Activated naive CD4-positive, alpha-beta T cell treated with anti-CD3 and anti-CD28 coated beads for 36 hours (primary cell): ENCODE measurements at regions of chr6 and their contacts with region 1.

Region 1: GRCh38 chr6:134174672-134175198 is 122.3 kb upstream of the SLC2A12 start:
- DNase-seq: peak; percentile 95
- H3K4me3 Mint-ChIP-seq: peak overlapping the region; percentile 97
- H3K27ac Mint-ChIP-seq: peak overlapping the region; percentile 97
- H3K4me1 Mint-ChIP-seq: peaks cover 60% of the 10 kb centered on the region
- H3K27me3 Mint-ChIP-seq: no peaks in the 10 kb centered on the region

Region 2: GRCh38 chr6:133877116-133877515 is 297.6 kb before region 1 on chr6:
- CTCF ChIA-PET with region 1: no interaction called
- intact Hi-C with region 1: no loop called
- DNase-seq: no peak
- H3K4me3 Mint-ChIP-seq: no peak overlapping the region
- H3K27ac Mint-ChIP-seq: no peak overlapping the region
- H3K4me1 Mint-ChIP-seq: no peaks in the 10 kb centered on the region
- H3K27me3 Mint-ChIP-seq: peaks cover 26% of the 10 kb centered on the region

Region 3: GRCh38 chr6:133952815-133953633 is 221.7 kb before region 1 on chr6 and contains the start of gene TBPL1:
- CTCF ChIA-PET with region 1: no interaction called
- intact Hi-C with region 1: loop called (anchors 5 kb)
- DNase-seq: peak; percentile 92
- H3K4me3 Mint-ChIP-seq: peak within 1 kb of the TSS; percentile 87
- H3K27ac Mint-ChIP-seq: peak within 1 kb of the TSS; percentile 86
- H3K4me1 Mint-ChIP-seq: peaks cover 36% of the 10 kb centered on the region
- H3K27me3 Mint-ChIP-seq: no peaks in the 10 kb centered on the region
- total RNA-seq, gene TBPL1: 27.0 to 27.6 TPM

Region 4: GRCh38 chr6:134235937-134236751 is 61.4 kb after region 1 on chr6:
- CTCF ChIA-PET with region 1: interaction called, 3 read pairs
- intact Hi-C with region 1: loop called (anchors 1 kb)
- DNase-seq: peak; percentile 41
- H3K4me3 Mint-ChIP-seq: peak overlapping the region; percentile 15
- H3K27ac Mint-ChIP-seq: peak overlapping the region; percentile 95
- H3K4me1 Mint-ChIP-seq: peaks cover 57% of the 10 kb centered on the region
- H3K27me3 Mint-ChIP-seq: no peaks in the 10 kb centered on the region

Region 5: DNA sequence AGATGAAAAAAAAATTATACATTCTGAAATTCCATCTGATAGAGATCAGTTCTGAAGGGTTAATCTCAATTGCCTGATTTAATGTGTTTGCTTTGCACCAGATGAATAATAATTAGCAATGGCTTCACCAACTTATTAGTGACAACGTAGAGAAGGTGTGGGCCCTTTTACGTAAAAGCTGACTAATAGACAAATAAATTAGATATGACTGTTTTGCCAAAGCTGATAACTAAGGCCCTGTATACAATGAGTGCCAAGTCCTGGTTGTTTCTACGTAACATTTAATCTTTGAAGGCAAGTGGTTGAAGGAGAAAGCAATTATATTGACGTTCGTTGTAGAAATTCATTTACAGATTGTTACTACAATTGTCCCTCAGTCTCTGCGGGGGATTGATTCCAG is 132.3 kb after region 1 on chr6:
- CTCF ChIA-PET with region 1: no interaction called
- intact Hi-C with region 1: no loop called
- DNase-seq: no peak
- H3K4me3 Mint-ChIP-seq: no peak overlapping the region
- H3K27ac Mint-ChIP-seq: no peak overlapping the region
- H3K4me1 Mint-ChIP-seq: peaks cover 15% of the 10 kb centered on the region
- H3K27me3 Mint-ChIP-seq: no peaks in the 10 kb centered on the region

Region 6: DNA sequence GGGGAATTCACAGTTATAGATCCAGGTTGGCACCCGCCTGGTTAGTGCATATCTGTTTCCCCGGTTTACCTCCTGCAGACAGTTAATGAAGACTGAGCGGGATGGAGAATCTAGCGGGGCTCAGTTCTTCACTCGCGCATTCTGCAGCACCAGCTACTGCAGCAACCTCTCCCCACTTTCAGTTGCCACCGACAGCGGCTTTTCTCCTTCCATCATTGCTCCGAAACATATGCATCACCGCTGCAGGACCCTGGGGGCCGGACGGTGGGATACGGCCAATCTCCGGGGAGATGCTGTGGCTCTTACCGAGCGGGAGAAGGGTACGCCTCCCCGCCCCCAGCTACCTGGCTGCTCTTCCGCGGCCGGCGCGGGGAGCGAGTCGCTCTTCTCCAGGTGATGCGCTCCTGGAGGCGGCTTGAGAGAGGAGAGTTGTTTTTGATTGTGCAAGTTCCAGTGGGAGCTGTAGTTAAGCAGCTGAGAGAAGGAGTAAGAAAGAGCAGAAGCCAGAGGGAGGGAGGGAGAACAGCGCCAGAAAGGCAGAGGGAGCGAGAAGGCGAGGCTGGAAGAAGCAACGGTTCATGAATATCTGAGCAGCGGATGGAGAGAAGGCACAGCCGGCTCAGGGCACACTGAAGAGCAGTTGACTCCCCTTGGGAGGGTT is 142.9 kb after region 1 on chr6 and contains the start of gene SGK1:
- CTCF ChIA-PET with region 1: no interaction called
- intact Hi-C with region 1: loop called (anchors 2 kb)
- DNase-seq: peak; percentile 43
- H3K4me3 Mint-ChIP-seq: peak within 1 kb of the TSS; percentile 85
- H3K27ac Mint-ChIP-seq: peak within 1 kb of the TSS; percentile 14
- H3K4me1 Mint-ChIP-seq: peaks cover 36% of the 10 kb centered on the region
- H3K27me3 Mint-ChIP-seq: peaks cover 21% of the 10 kb centered on the region
- total RNA-seq, gene SGK1: 202 to 208 TPM

Region 7: GRCh38 chr6:134379086-134379485 is 204.4 kb after region 1 on chr6:
- CTCF ChIA-PET with region 1: interaction called, 5 read pairs
- intact Hi-C with region 1: loop called (anchors 1 kb)
- DNase-seq: peak; percentile 87
- H3K4me3 Mint-ChIP-seq: peak overlapping the region; percentile 35
- H3K27ac Mint-ChIP-seq: peak overlapping the region; percentile 84
- H3K4me1 Mint-ChIP-seq: peaks cover 40% of the 10 kb centered on the region
- H3K27me3 Mint-ChIP-seq: no peaks in the 10 kb centered on the region

Region 8: DNA sequence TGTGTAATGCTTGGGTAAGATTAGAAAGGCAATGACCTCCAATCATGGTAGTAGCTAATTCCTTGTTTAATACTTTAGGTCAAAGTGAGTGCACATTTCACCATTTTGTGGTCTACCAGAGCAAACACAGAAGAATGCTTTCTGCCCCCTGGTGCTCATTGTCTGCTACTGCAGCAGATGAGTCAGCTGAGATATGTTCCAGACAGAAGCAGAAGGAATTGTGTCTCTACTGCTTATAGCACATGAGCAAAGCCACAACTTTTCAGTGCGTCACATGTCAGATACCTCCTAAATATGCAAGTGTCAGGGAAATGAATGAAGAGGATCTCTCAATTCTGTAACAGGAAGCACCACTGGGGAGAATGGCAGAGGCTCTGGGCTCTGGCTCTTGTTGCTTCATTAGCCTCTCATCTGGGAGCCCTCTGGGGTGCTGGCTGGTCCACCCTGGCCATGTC is 466.3 kb after region 1 on chr6:
- CTCF ChIA-PET with region 1: interaction called, 25 read pairs
- intact Hi-C with region 1: loop called (anchors 1 kb)
- DNase-seq: peak; percentile 91
- H3K4me3 Mint-ChIP-seq: no peak overlapping the region
- H3K27ac Mint-ChIP-seq: peak overlapping the region; percentile 57
- H3K4me1 Mint-ChIP-seq: peaks cover 34% of the 10 kb centered on the region
- H3K27me3 Mint-ChIP-seq: no peaks in the 10 kb centered on the region

Region 9: DNA sequence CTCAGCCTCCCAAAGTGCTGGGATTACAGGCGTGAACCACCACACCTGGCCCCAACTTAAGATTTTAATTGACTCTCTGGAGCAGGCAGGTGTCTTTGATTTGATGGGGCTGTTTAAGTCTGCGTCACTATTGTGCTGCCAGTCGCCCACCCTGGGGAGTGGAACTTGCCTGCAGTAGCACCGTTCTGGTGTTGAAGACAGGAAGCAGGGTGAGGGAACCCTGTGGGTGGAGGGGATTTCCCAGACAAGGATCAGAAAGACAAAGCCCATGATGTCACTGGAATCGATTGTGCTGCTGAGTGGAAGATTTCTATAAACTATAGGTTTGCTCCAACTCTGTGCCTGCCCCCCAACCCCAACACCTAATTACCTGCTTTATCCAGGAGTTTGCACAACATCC is 764.2 kb after region 1 on chr6:
- CTCF ChIA-PET with region 1: interaction called, 10 read pairs
- intact Hi-C with region 1: loop called (anchors 1 kb)
- DNase-seq: peak; percentile 85
- H3K4me3 Mint-ChIP-seq: no peak overlapping the region
- H3K27ac Mint-ChIP-seq: no peak overlapping the region
- H3K4me1 Mint-ChIP-seq: peaks cover 21% of the 10 kb centered on the region
- H3K27me3 Mint-ChIP-seq: no peaks in the 10 kb centered on the region